Ascending aorta (tissue), 2 donors: ENCODE measurements at regions of chr20 and their contacts with region 1.

Region 1: GRCh38 chr20:31951530-31952453 is at the start of gene PDRG1:
- DNase-seq: peak; percentile 79 to 97
- H3K4me3 ChIP-seq: peak within 1 kb of the TSS; percentile 95 to 100
- H3K27ac ChIP-seq: peak within 1 kb of the TSS; percentile 77 to 81
- H3K4me1 ChIP-seq: peaks cover 8 to 12% of the 10 kb centered on the region in 2 donors
- H3K27me3 ChIP-seq: no peaks in the 10 kb centered on the region
- CTCF ChIP-seq: peak; percentile 91 to 96 (median 94)
- total RNA-seq, gene PDRG1: 1.7 TPM

Region 2: DNA sequence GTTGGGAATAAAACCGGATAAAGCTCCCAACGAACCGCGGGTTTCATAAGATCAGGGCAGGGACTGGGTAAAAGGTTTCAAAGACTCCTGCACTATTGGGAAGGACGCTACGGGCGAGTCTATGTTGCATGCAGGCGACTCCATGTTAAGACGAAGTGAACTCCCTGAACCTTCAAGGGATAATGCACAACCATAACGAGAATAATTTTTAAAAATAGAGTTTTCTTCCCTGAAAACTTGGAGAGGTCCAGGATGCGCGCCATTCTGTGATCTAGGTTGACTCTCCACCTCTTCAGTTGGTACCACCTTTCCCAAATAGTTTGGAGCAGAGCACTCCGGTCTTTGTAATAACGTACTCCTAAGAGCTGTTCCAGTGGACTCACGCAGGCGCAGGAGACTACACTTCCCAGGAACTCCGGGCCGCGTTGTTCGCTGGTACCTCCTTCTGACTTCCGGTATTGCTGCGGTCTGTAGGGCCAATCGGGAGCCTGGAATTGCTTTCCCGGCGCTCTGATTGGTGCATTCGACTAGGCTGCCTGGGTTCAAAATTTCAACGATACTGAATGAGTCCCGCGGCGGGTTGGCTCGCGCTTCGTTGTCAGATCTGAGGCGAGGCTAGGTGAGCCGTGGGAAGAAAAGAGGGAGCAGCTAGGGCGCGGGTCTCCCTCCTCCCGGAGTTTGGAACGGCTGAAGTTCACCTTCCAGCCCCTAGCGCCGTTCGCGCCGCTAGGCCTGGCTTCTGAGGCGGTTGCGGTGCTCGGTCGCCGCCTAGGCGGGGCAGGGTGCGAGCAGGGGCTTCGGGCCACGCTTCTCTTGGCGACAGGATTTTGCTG is 212.8 kb before region 1 on chr20 and contains the start of gene TPX2:
- intact Hi-C with region 1: loop called (anchors 5 kb)
- DNase-seq: peak; percentile 90 to 97
- H3K4me3 ChIP-seq: peak within 1 kb of the TSS; percentile 61 to 77
- H3K27ac ChIP-seq: peak within 1 kb of the TSS; percentile 50 to 64
- H3K4me1 ChIP-seq: peaks cover 0 to 3% of the 10 kb centered on the region in 2 donors
- H3K27me3 ChIP-seq: no peaks in the 10 kb centered on the region
- CTCF ChIP-seq: peak; percentile 13 to 23 (median 19)
- total RNA-seq, gene TPX2: not detected

Region 3: GRCh38 chr20:31849455-31849925 is 102.3 kb before region 1 on chr20:
- intact Hi-C with region 1: loop called (anchors 1 kb)
- DNase-seq: no peak
- H3K4me3 ChIP-seq: no peak overlapping the region
- H3K27ac ChIP-seq: no peak overlapping the region
- H3K4me1 ChIP-seq: peaks cover 9% of the 10 kb centered on the region in 2 donors
- H3K27me3 ChIP-seq: no peaks in the 10 kb centered on the region
- CTCF ChIP-seq: no peak

Region 4: DNA sequence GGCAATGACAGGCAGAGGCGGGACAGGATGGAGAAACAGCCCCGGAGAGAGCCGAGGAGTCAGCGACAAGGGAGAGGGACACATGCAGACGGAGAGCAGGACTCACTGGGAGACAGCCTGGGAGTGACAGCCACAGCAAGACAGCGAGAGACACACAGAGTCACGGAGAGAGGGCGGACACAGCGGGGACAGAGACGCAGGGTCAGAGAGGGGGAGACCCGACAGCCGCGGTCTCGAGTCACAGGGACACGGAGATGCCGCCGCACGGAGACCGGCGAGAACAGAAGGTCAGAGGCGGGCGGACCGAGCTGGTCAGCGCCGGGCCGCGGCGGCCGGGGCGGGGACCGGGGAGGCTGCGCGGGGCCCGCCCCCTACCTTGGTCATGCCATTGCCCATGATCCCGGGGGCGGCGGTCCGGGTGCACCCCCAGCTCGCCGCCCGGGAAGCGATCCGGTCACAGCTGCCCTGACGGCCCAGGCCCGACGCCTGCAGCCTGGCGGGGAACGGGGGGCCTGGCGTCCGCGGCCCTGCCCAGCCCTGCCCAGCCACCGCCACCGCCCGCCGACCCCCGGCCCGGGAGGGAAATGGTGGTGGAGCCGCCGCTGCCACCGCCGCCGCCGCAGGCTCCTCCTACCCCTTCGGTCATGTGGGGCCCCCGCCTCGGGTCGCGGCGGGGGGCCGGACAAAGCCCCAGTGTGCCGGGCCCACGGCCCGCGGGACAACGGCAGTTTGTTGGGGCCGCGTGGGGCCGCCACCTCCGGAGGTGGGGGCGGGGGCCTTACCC is 81.7 kb before region 1 on chr20 and contains the starts of genes DUSP15 and TTLL9:
- intact Hi-C with region 1: loop called (anchors 5 kb)
- DNase-seq: peak in 1 of 2 donors; percentile 77
- H3K4me3 ChIP-seq: peak within 1 kb of the TSS; percentile 88 to 90
- H3K27ac ChIP-seq: peak within 1 kb of the TSS; percentile 41 to 68
- H3K4me1 ChIP-seq: peaks cover 5 to 21% of the 10 kb centered on the region in 2 donors
- H3K27me3 ChIP-seq: no peaks in the 10 kb centered on the region
- CTCF ChIP-seq: no peak
- total RNA-seq, gene DUSP15: 13.0 TPM
- total RNA-seq, gene TTLL9: not detected

Region 5: DNA sequence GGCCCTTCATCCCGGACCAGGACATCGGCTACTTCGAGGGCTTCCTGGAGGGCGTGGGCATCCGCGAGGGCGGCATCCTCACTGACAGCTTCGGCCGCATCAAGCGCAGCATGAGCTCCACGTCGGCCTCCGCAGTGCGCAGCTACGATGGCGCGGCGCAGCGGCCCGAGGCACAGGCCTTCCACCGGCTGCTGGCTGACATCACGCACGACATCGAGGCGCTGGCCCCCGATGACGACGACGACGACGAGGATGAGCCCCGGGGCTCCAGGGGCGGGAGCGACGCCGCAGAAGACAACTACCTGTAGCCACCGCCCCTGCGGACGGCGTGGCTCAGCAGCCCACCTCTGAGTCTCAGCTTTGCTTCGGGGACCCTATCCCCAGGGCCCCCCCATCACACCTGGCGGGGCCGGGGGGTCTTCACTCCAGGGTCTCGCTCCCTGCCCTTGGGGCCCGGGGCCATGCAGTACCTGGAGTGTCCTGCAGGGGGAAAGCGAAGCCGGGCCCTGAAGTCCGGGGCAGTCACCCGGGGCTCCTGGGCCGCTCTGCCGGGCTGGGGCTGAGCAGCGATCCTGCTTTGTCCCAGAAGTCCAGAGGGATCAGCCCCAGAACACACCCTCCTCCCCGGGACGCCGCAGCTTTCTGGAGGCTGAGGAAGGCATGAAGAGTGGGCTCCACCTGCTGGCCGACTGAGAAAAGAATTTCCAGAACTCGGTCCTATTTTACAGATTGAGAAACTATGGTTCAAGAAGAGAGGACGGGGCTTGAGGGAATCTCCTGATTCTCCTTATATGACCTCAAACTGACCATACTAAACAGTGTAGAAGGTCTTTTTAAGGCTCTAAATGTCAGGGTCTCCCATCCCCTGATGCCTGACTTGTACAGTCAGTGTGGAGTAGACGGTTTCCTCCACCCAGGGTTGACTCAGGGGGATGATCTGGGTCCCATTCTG is 79.5 kb after region 1 on chr20:
- intact Hi-C with region 1: loop called (anchors 2 kb)
- DNase-seq: peak in 1 of 2 donors; percentile 78
- H3K4me3 ChIP-seq: peak overlapping the region; percentile 10 to 52
- H3K27ac ChIP-seq: no peak overlapping the region
- H3K4me1 ChIP-seq: peaks cover 3 to 8% of the 10 kb centered on the region in 2 donors
- H3K27me3 ChIP-seq: no peaks in the 10 kb centered on the region
- CTCF ChIP-seq: peak; percentile 73 to 82 (median 74)